ENCODE measurements at regions of chr19 and their contacts with region 1.

Region 1: DNA sequence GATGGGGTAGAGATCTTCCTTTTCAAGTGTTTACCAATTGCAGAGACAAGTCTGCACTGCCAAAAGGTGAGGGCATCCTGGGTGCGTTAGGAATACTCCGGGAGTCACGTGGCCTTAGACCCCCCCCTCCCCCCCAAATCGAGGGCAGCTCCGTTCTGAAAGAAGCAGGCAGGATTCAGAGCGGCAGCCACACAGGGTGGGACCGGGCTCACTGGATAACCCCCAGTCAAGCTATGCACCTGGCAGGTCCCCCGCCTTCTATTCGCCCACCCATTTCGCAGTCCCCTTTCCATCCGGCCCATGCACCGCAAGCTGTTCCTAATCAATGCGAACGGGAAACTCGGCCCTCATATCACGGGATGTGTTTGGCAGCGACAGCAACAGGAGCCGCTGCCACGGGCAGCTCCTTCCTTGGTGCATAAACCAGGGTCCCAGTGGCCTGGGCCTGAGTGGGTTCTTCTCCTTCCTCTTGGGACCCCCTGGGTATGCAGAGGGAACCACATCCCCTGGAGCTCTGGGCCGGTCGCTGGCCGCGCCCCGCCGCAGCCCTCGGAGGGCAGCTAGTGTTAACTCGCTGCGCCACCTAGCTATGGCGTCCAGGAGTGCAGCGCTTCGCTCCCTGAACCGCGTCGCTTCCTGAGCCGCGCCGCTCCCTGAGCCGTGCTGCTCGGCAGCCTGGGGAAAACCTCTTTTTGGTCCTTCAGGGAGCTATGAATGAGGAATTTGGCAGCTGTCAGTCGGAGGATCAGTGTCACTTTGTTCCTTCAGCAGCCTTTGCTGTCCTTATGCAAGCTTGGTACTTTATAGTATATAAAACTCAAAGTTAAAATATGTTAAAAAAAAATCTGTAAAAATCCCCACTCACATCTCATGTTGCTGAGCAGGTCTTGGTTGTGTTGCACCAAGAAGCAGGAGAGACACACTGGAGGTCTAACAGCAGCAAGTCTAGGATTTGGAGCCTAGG is 41.4 kb downstream of the LYL1 start:
- DNase-seq: peak; percentile 93
- ATAC-seq: peak; percentile 85
- H3K4me3 Mint-ChIP-seq: peak overlapping the region; percentile 64
- H3K27ac Mint-ChIP-seq: no peak overlapping the region
- H3K4me1 Mint-ChIP-seq: peaks cover 26% of the 10 kb centered on the region
- H3K27me3 Mint-ChIP-seq: peaks cover 76% of the 10 kb centered on the region
- CTCF ChIP-seq: peak; percentile 76

Region 2: DNA sequence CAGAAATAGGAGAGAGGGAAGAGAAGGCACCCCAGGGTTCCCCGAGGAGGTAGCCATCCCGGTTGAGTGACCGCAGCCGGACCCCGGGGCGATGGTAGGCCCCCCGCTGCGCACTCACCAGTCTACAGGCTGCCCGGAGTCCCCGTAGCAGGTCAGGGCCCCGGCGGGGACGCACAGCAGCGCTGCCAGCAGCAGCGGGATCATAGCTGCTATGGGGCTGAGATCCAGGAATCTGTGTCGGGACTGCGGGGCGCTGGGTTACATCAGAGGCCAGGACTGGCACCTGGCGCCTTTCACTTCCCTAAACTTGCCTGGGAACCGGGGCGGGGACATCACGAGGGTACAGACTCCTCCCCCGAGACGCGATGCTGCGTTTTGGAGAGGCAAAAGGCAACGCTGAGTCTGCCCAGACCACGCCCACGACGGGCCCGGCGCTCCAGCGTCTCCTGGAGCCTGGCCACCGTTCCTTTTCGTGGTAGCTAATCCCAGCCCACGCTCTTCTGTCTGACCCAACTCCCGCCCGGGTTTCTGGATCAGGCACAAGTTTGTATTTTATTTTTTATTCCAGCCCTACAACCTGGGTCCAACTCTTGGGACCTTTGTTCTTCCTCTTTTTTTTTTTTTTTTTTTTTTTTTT is 180.0 kb before region 1 on chr19 and contains the start of gene DNASE2:
- CTCF ChIA-PET with region 1: interaction called, 10 read pairs
- POLR2A ChIA-PET with region 1: no interaction called
- DNase-seq: peak; percentile 97
- ATAC-seq: peak; percentile 66
- H3K4me3 Mint-ChIP-seq: peak within 1 kb of the TSS; percentile 90
- H3K27ac Mint-ChIP-seq: peak within 1 kb of the TSS; percentile 94
- H3K4me1 Mint-ChIP-seq: peaks cover 8% of the 10 kb centered on the region
- H3K27me3 Mint-ChIP-seq: peaks cover 30% of the 10 kb centered on the region
- CTCF ChIP-seq: no peak
- total RNA-seq, gene DNASE2: 31.7 to 35.7 TPM (median 33.4 TPM) in 3 replicates

Region 3: GRCh38 chr19:12983542-12984142 is 77.6 kb before region 1 on chr19:
- CTCF ChIA-PET with region 1: interaction called, 188 read pairs
- POLR2A ChIA-PET with region 1: no interaction called
- DNase-seq: peak; percentile 81
- ATAC-seq: peak; percentile 76
- H3K4me3 Mint-ChIP-seq: no peak overlapping the region
- H3K27ac Mint-ChIP-seq: no peak overlapping the region
- H3K4me1 Mint-ChIP-seq: peaks cover 6% of the 10 kb centered on the region; the same call in 1 of the 2 replicates
- H3K27me3 Mint-ChIP-seq: peaks cover 39% of the 10 kb centered on the region
- CTCF ChIP-seq: peak; percentile 94

Region 4: GRCh38 chr19:13012690-13013608 is 48.3 kb before region 1 on chr19:
- CTCF ChIA-PET with region 1: interaction called, 28 read pairs
- POLR2A ChIA-PET with region 1: no interaction called
- DNase-seq: peak; percentile 44
- ATAC-seq: no peak
- H3K4me3 Mint-ChIP-seq: peak overlapping the region; percentile 58
- H3K27ac Mint-ChIP-seq: no peak overlapping the region
- H3K4me1 Mint-ChIP-seq: peaks cover 59% of the 10 kb centered on the region
- H3K27me3 Mint-ChIP-seq: peaks cover 100% of the 10 kb centered on the region
- CTCF ChIP-seq: no peak

Region 5: DNA sequence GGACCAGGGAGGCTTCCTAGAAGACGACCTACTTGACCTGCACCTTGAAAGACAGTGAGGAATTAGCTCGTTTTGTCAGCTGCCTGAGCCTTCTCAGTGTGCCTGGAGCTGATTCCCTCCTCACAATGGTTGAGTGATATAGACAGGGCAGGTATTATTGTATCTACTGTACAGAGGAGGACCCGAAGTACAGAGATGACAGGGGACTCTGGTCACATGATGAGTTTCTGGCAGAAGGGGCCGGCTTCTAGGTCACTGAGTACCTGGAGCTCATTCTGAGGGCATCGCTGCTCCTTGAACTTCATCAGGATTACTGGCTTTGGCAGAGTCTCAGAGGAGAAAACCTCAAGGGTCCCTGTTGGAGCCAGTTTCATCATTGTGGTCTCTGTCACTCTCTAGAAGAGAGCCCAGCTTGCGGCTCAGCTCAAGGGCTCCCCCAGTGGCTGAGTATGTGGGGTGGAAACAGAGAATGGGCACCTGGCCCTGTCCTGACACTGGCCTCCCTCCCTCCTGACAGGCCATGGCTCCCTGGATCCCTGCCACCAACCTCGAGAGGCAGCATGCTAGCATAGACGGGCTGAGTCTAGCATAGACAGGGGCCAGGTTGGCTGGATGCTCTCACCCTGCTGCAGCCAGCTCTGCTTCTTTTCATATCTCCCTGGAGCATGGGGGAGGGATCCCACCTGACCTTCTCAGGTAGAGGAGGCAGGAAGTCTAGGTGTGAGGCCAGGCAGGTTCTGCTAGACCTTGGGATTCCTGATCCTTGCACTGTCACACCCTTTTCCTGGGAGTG is 27.2 kb before region 1 on chr19:
- CTCF ChIA-PET with region 1: interaction called, 293 read pairs
- POLR2A ChIA-PET with region 1: interaction called, 5 read pairs
- DNase-seq: peak; percentile 85
- ATAC-seq: peak; percentile 91
- H3K4me3 Mint-ChIP-seq: no peak overlapping the region
- H3K27ac Mint-ChIP-seq: no peak overlapping the region
- H3K4me1 Mint-ChIP-seq: peaks cover 8% of the 10 kb centered on the region
- H3K27me3 Mint-ChIP-seq: peaks cover 81% of the 10 kb centered on the region
- CTCF ChIP-seq: peak; percentile 53

Region 6: DNA sequence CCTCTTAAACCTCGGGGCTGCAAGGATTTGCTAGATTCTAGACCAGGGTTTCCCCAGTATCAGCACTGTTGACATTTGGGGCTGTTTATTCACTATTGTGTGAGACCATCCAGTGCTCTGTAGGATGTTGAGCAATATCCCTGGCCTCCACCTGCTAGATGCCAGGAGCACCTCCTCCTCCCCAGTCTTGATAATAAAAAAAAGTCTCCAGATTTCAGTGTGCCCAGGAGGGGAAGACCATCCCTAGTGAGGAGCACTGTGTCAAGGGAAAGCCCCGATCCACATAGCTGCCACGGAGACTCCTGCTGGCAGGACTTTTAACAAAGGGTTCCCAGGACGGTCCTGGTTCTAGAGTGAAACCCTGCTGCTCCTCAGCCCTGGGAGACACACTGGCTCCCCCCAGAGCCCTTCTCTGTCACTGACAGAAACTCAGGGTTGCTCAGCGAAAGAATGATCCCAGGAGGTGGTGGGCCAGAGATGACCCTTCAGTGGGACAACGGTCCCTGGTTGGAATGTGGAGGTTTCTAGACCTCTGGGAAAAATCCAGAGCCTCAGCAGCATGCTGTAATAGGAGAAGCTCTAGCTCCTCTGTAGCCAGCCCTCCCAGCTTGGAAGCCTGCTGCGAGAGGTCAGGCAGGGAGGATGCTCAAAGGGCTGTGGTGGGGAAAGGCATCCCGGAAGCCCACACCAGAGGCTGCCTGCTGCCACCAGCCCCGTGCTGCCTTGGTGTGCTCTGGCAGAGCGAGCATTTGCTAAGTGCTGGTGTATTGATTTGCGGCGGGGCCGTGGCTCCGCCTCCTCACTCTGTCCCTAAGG is 21.2 kb after region 1 on chr19:
- CTCF ChIA-PET with region 1: interaction called, 294 read pairs
- POLR2A ChIA-PET with region 1: interaction called, 3 read pairs
- DNase-seq: peak; percentile 60
- ATAC-seq: peak; percentile 67
- H3K4me3 Mint-ChIP-seq: peak overlapping the region; percentile 40; the same call in 1 of the 2 replicates
- H3K27ac Mint-ChIP-seq: no peak overlapping the region
- H3K4me1 Mint-ChIP-seq: peaks cover 37% of the 10 kb centered on the region
- H3K27me3 Mint-ChIP-seq: peaks cover 19% of the 10 kb centered on the region
- CTCF ChIP-seq: no peak

Region 7: DNA sequence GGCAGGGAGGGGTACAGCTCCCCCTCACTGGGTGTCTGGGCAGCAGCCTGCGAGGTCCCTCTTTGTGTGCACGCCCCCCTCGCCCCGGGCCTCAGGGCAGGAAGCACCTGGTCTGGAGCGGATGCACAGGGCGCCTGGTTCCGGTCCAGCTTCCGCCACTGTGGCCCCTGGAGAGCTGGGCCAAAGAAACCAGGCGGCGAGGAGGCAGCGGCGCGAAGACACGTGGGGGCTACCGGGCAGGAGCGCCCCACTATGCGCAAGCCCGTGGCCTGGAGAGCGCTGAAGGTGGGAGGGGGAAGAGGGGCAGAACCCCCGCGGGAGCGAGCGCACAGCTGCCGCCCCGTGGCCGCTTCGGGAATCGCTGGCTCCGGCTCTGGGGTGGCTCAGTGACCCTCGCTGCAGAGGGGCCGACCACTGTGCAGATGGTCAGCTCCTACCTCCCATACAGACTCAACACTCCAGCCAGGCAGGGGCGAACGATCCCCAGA is 43.2 kb after region 1 on chr19:
- CTCF ChIA-PET with region 1: interaction called, 17 read pairs
- POLR2A ChIA-PET with region 1: no interaction called
- DNase-seq: peak; percentile 82
- ATAC-seq: peak; percentile 57
- H3K4me3 Mint-ChIP-seq: no peak overlapping the region
- H3K27ac Mint-ChIP-seq: no peak overlapping the region; the same call in 1 of the 2 replicates
- H3K4me1 Mint-ChIP-seq: peaks cover 4% of the 10 kb centered on the region
- H3K27me3 Mint-ChIP-seq: peaks cover 30% of the 10 kb centered on the region
- CTCF ChIP-seq: peak; percentile 73